Heart right ventricle (tissue), 16 donors: ENCODE measurements at regions of chr13 and their contacts with region 1.

Region 1: GRCh38 chr13:20590561-20590960 is 23.6 kb downstream of the IFT88 start:
- DNase-seq: no peak
- ATAC-seq: no peak
- H3K4me3 ChIP-seq: no peak overlapping the region
- H3K27ac ChIP-seq: no peak overlapping the region
- H3K4me1 ChIP-seq: no peaks in the 10 kb centered on the region
- H3K27me3 ChIP-seq: no peaks in the 10 kb centered on the region
- CTCF ChIP-seq: no peak

Region 2: DNA sequence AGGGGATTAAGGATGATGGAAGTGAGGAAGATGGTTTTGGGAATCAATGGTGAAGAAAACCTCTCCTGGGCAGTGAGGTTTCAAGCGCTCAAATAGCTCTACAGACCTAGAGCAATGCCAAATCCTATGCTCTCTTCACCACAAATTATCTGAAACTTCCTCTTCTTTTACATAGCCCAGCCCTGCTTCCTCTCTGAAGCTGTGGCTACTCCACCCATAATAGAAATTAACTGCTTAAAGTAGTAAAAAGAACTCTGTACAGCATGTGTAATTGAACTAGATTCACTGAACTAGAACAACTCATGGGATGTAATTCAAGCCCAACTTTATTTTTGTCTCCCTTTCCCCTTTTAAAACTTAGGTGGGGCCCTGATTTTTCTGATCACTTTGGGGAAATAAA is 44.0 kb before region 1 on chr13:
- intact Hi-C with region 1: no loop called
- DNase-seq: no peak
- ATAC-seq: peak in 2 of 8 donors; percentile 33 to 35
- H3K4me3 ChIP-seq: no peak overlapping the region
- H3K27ac ChIP-seq: no peak overlapping the region
- H3K4me1 ChIP-seq: peaks cover 0 to 19% (median 0%) of the 10 kb centered on the region in 9 donors
- H3K27me3 ChIP-seq: no peaks in the 10 kb centered on the region
- CTCF ChIP-seq: no peak

Region 3: GRCh38 chr13:20647758-20648157 is 57.2 kb after region 1 on chr13:
- intact Hi-C with region 1: loop called in 1 of 10 experiments (anchors 10 kb)
- DNase-seq: no peak
- ATAC-seq: no peak
- H3K4me3 ChIP-seq: no peak overlapping the region
- H3K27ac ChIP-seq: no peak overlapping the region
- H3K4me1 ChIP-seq: no peaks in the 10 kb centered on the region
- H3K27me3 ChIP-seq: no peaks in the 10 kb centered on the region
- CTCF ChIP-seq: no peak